GM12878 (cell line): ENCODE measurements at regions of chr5 and their contacts with region 1.

Region 1: DNA sequence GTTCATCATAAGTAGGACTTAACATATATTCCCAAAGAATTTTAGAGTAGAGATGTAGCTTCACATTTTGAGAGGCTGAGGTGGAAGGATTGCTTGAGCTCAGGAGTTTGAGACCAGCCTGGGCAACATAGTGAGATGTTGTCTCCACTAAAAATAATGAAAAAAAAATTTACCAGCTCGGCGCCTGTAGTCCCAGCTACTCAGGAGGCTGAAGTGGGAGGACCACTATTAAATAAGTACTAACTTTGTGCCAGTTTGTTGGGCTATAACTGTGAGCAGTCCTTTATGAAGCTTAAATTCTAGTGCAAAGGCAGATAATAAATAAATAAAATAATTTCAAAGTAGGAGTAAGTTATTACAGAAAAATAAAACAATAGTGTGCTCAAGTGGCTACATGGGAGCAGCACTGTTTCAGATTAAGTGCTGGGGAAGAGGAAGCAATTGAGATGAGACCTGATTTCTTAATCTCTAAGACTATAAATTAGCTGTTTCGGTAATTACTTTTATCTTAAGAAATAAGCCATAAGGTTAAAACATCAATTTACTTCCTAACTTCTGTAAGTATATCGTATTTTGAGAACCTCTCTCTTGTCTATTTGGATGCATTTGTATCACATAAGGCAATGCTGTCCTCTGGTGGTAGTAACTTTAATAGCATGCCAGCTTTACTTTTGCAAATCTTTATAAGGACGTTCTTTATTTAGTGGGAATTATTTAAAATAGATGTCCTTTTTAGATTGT is 98.9 kb downstream of the CSNK1G3 start:
- DNase-seq: peak; percentile 17
- ATAC-seq: peak; percentile 81
- H3K4me3 ChIP-seq: no peak overlapping the region
- H3K27ac ChIP-seq: no peak overlapping the region
- H3K4me1 ChIP-seq: peaks cover under 1% of the 10 kb centered on the region; the same call in 1 of the 2 replicates
- H3K27me3 ChIP-seq: no peaks in the 10 kb centered on the region
- CTCF ChIP-seq: peak; percentile 89 to 96 (median 91)
- EP300 ChIP-seq: no peak
- POLR2A ChIP-seq: no peak
- RAD21 ChIP-seq: peak; percentile 99

Region 2: GRCh38 chr5:122500245-122501075 is 1110.4 kb before region 1 on chr5:
- CTCF ChIA-PET with region 1: no interaction called
- POLR2A ChIA-PET with region 1: no interaction called
- RAD21 ChIA-PET with region 1: interaction called, 3 read pairs
- SMC1A ChIA-PET with region 1: no interaction called
- in situ Hi-C with region 1: loop called (anchors 25 kb)
- intact Hi-C with region 1: loop called (anchors 5 kb)
- DNase-seq: no peak
- ATAC-seq: peak; percentile 79
- H3K4me3 ChIP-seq: no peak overlapping the region
- H3K27ac ChIP-seq: no peak overlapping the region
- H3K4me1 ChIP-seq: no peaks in the 10 kb centered on the region
- H3K27me3 ChIP-seq: peaks cover 0 to 2% of the 10 kb centered on the region in 2 experiments; a peak in 1 of 4 replicates
- CTCF ChIP-seq: peak in 2 of 3 experiments; percentile 33 to 56; a peak in 4 of 6 replicates
- EP300 ChIP-seq: no peak
- POLR2A ChIP-seq: no peak
- RAD21 ChIP-seq: peak; percentile 73

Region 3: DNA sequence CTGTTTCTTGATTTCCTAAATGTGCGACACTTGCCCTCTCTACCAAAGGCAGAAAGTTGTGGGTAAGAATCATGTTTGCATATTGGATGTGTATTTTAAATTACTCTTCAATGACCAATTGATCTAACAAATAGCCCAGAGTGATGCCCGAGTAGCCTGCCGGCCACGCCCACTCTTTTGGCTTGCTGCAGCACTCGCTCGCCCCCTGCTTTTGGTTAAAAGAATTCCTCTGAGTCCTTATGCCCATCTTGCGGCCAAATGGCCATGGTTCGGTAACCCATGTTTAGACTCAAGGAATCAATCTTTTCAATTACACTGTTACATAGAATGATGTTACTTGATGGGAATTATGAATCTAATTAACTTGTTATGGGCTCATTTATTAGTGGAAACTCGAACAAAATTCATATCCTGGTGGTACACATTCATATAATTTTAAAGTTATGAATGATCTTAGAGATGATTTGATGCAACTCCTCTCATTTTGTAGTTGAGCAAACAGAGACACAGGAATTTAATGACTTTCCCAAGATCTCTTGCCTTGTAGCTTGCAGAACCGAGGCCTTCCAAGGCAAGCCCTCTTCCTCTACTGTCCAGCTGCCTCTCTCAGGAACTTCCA is 610.8 kb before region 1 on chr5:
- CTCF ChIA-PET with region 1: no interaction called
- POLR2A ChIA-PET with region 1: no interaction called
- RAD21 ChIA-PET with region 1: no interaction called
- SMC1A ChIA-PET with region 1: no interaction called
- in situ Hi-C with region 1: no loop called
- intact Hi-C with region 1: loop called (anchors 10 kb)
- DNase-seq: peak; percentile 40
- ATAC-seq: peak; percentile 99
- H3K4me3 ChIP-seq: no peak overlapping the region
- H3K27ac ChIP-seq: no peak overlapping the region
- H3K4me1 ChIP-seq: no peaks in the 10 kb centered on the region
- H3K27me3 ChIP-seq: no peaks in the 10 kb centered on the region
- CTCF ChIP-seq: peak; percentile 79 to 89 (median 82)
- EP300 ChIP-seq: no peak
- POLR2A ChIP-seq: no peak
- RAD21 ChIP-seq: peak; percentile 95

Region 4: DNA sequence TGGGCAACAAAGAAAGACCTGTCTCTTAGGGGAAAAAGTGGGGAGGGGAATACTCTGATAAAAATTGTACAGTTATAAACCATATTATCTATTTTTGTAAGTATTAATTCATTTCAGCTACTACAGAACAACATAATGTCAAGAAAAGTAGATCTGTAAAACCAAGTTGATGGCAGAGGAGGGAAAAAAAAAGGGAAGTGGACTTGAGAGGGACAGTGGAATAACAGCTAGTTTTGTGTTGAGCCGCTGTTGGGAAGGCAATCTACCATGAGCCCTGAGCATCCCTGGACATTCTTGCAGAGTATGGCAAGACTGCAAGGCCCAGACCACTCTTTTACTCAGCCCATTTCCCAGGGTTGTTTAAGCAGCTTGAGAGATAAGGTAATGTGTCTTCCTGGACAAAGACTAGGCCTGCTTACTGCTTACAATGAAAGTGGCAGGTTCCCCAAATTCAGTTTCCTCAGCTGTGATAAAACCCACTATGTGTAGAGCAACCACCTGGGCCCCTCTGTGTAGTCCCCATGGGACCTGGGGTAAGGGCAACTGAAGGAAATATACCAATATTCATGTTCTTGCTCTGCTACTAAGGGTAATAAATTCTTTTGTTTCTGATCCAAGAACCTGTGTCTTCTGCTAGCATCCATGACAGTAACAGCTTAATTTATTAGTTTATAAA is 212.6 kb before region 1 on chr5:
- CTCF ChIA-PET with region 1: interaction called, 6 read pairs
- POLR2A ChIA-PET with region 1: no interaction called
- RAD21 ChIA-PET with region 1: interaction called, 5 read pairs
- SMC1A ChIA-PET with region 1: interaction called, 3 read pairs
- in situ Hi-C with region 1: loop called (anchors 25 kb)
- intact Hi-C with region 1: loop called (anchors 10 kb)
- DNase-seq: no peak
- ATAC-seq: peak; percentile 39; the same call in 1 of the 3 replicates
- H3K4me3 ChIP-seq: no peak overlapping the region
- H3K27ac ChIP-seq: no peak overlapping the region
- H3K4me1 ChIP-seq: no peaks in the 10 kb centered on the region
- H3K27me3 ChIP-seq: no peaks in the 10 kb centered on the region
- CTCF ChIP-seq: no peak
- EP300 ChIP-seq: no peak
- POLR2A ChIP-seq: no peak
- RAD21 ChIP-seq: no peak

Region 5: GRCh38 chr5:123511648-123512605 is 98.9 kb before region 1 on chr5 and contains the start of gene CSNK1G3:
- CTCF ChIA-PET with region 1: interaction called, 14 read pairs
- POLR2A ChIA-PET with region 1: no interaction called
- RAD21 ChIA-PET with region 1: interaction called, 8 read pairs
- SMC1A ChIA-PET with region 1: interaction called, 16 read pairs
- in situ Hi-C with region 1: no loop called
- intact Hi-C with region 1: loop called (anchors 2 kb)
- DNase-seq: peak; percentile 82
- ATAC-seq: peak; percentile 95
- H3K4me3 ChIP-seq: peak within 1 kb of the TSS; percentile 82
- H3K27ac ChIP-seq: peak within 1 kb of the TSS; percentile 83
- H3K4me1 ChIP-seq: peaks cover 9% of the 10 kb centered on the region
- H3K27me3 ChIP-seq: no peaks in the 10 kb centered on the region
- CTCF ChIP-seq: peak in 1 of 3 experiments; percentile 19; a peak in 2 of 6 replicates
- EP300 ChIP-seq: no peak
- POLR2A ChIP-seq: peak; percentile 96
- RAD21 ChIP-seq: no peak
- polyA plus RNA-seq, gene CSNK1G3: 7.4 to 7.8 TPM

Region 6: GRCh38 chr5:123624132-123624531 is 13.3 kb after region 1 on chr5:
- CTCF ChIA-PET with region 1: interaction called, 20 read pairs
- POLR2A ChIA-PET with region 1: no interaction called
- RAD21 ChIA-PET with region 1: interaction called, 6 read pairs
- SMC1A ChIA-PET with region 1: interaction called, 4 read pairs
- in situ Hi-C with region 1: no loop called
- intact Hi-C with region 1: no loop called
- DNase-seq: no peak
- ATAC-seq: no peak
- H3K4me3 ChIP-seq: no peak overlapping the region
- H3K27ac ChIP-seq: no peak overlapping the region
- H3K4me1 ChIP-seq: no peaks in the 10 kb centered on the region
- H3K27me3 ChIP-seq: no peaks in the 10 kb centered on the region
- CTCF ChIP-seq: no peak
- EP300 ChIP-seq: no peak
- POLR2A ChIP-seq: no peak
- RAD21 ChIP-seq: no peak